Ovary (tissue), 10 donors: ENCODE measurements at regions of chr10 and their contacts with region 1.

Region 1: GRCh38 chr10:36349445-36350078 is 707.5 kb upstream of the FZD8 start:
- DNase-seq: no peak
- H3K4me3 ChIP-seq: no peak overlapping the region
- H3K27ac ChIP-seq: no peak overlapping the region
- H3K4me1 ChIP-seq: no peaks in the 10 kb centered on the region
- H3K27me3 ChIP-seq: no peaks in the 10 kb centered on the region
- CTCF ChIP-seq: no peak
- EP300 ChIP-seq: no peak
- POLR2A ChIP-seq: no peak

Region 2: GRCh38 chr10:35803046-35803445 is 546.5 kb before region 1 on chr10:
- intact Hi-C with region 1: loop called in 1 of 4 experiments (anchors 2 kb)
- DNase-seq: no peak
- H3K4me3 ChIP-seq: no peak overlapping the region
- H3K27ac ChIP-seq: no peak overlapping the region
- H3K4me1 ChIP-seq: no peaks in the 10 kb centered on the region
- H3K27me3 ChIP-seq: no peaks in the 10 kb centered on the region
- CTCF ChIP-seq: no peak
- EP300 ChIP-seq: no peak
- POLR2A ChIP-seq: no peak

Region 3: GRCh38 chr10:36324831-36325387 is 24.7 kb before region 1 on chr10:
- intact Hi-C with region 1: no loop called
- DNase-seq: no peak
- H3K4me3 ChIP-seq: no peak overlapping the region
- H3K27ac ChIP-seq: no peak overlapping the region
- H3K4me1 ChIP-seq: no peaks in the 10 kb centered on the region
- H3K27me3 ChIP-seq: no peaks in the 10 kb centered on the region
- CTCF ChIP-seq: no peak
- EP300 ChIP-seq: no peak
- POLR2A ChIP-seq: no peak

Region 4: DNA sequence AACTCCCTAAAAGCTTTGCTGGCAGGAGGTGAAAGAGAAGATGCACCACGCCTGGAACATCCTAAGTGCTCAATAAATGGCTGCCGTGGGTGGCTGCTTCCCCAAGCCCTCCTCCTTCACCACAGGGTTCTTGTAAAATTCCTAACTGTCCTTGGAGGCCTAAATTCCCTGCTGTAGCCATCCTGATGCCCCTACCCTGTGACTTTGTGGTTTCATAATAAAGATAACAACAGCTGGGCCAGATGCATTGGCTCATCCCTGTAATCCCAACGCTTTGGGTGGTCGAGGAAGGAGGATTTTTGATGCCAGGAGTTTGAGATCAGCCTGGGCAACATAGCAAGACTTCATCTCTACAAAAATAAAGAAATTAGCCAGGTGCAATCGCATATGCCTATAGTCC is 1117.7 kb after region 1 on chr10:
- intact Hi-C with region 1: no loop called
- DNase-seq: no peak
- H3K4me3 ChIP-seq: no peak overlapping the region
- H3K27ac ChIP-seq: no peak overlapping the region
- H3K4me1 ChIP-seq: no peaks in the 10 kb centered on the region
- H3K27me3 ChIP-seq: no peaks in the 10 kb centered on the region
- CTCF ChIP-seq: no peak
- EP300 ChIP-seq: no peak
- POLR2A ChIP-seq: no peak